Dorsolateral prefrontal cortex (tissue), 120 donors: ENCODE measurements at regions of chr5 and their contacts with region 1.

Region 1: GRCh38 chr5:36241631-36242533 is at the start of gene NADK2:
- DNase-seq: peak; percentile 89 to 96 (median 95)
- H3K4me3 ChIP-seq: peak within 1 kb of the TSS; percentile 73 to 97 (median 89)
- H3K27ac ChIP-seq: peak within 1 kb of the TSS; percentile 78 to 99 (median 97)
- H3K27me3 ChIP-seq: no peaks in the 10 kb centered on the region
- CTCF ChIP-seq: peak; percentile 37 to 90 (median 70)
- total RNA-seq, gene NADK2: 33.0 to 108 (median 60.6) TPM

Region 2: DNA sequence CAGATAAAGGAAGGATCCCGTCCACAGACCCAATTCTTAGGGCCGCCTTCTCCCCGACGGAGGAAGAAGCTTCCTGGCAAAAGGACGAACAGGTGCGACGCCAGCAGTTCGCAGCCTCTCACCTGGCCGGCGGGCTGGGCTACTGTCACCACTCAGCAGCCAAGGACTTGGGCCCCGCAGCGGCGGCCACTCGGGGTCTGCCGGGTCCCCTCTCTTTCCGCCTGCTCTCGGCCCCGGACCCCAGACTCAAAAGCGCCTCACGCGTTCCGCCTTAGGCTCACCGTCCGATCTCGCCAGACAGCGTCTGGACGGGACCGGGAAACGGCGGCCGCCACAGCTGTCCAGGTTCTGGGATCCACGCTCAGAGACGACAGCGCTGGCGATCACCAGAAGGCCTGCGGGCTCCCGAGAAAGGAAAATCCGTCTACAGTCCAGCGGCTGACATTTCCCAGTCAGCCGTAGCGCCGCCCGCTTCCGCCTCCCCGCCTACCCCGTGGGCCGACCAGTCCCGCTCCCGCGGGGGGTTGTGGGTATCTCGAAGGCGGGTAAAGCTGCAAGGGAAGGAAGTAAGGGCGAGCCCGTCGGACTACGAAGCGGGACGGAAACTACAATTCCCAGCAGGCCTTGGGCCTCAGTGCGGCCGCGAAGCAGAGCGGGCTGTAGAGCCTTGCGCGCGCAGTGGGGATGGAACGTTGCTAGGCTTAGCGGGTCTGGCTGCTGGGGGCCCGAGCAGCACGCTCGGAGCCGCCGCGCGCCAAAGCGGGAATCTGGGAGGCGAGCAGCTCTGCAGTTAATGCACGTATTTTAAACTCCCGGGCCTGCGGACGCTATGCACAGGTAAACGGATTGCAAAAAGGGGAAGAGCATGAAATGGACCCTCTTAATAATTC is 90.2 kb before region 1 on chr5 and contains the starts of genes LMBRD2 and SKP2:
- intact Hi-C with region 1: loop called (anchors 2 kb)
- DNase-seq: peak; percentile 97 to 100 (median 99)
- H3K4me3 ChIP-seq: peak within 1 kb of the TSS; percentile 69 to 100 (median 95)
- H3K27ac ChIP-seq: peak within 1 kb of the TSS in 58 of 59 donors; percentile 42 to 95 (median 83)
- H3K27me3 ChIP-seq: no peaks in the 10 kb centered on the region
- CTCF ChIP-seq: peak in 47 of 56 donors; percentile 7 to 69 (median 37)
- total RNA-seq, gene LMBRD2: 22.9 to 79.1 (median 51.0) TPM
- total RNA-seq, gene SKP2: 11.3 to 30.0 (median 19.1) TPM

Region 3: GRCh38 chr5:36162810-36163486 is 78.9 kb before region 1 on chr5:
- intact Hi-C with region 1: loop called in 1 of 2 experiments (anchors 5 kb)
- DNase-seq: peak in 2 of 10 donors; percentile 60 to 63
- H3K4me3 ChIP-seq: peak overlapping the region in 35 of 59 donors; percentile 1 to 55 (median 30)
- H3K27ac ChIP-seq: peak overlapping the region in 55 of 59 donors; percentile 6 to 90 (median 73)
- H3K27me3 ChIP-seq: no peaks in the 10 kb centered on the region
- CTCF ChIP-seq: peak in 2 of 56 donors; percentile 12 to 25

Region 4: GRCh38 chr5:36177715-36178523 is 64.0 kb before region 1 on chr5:
- intact Hi-C with region 1: loop called in 1 of 2 experiments (anchors 5 kb)
- DNase-seq: no peak
- H3K4me3 ChIP-seq: no peak overlapping the region
- H3K27ac ChIP-seq: peak overlapping the region in 55 of 59 donors; percentile 5 to 93 (median 71)
- H3K27me3 ChIP-seq: no peaks in the 10 kb centered on the region
- CTCF ChIP-seq: peak; percentile 39 to 78 (median 62)

Region 5: DNA sequence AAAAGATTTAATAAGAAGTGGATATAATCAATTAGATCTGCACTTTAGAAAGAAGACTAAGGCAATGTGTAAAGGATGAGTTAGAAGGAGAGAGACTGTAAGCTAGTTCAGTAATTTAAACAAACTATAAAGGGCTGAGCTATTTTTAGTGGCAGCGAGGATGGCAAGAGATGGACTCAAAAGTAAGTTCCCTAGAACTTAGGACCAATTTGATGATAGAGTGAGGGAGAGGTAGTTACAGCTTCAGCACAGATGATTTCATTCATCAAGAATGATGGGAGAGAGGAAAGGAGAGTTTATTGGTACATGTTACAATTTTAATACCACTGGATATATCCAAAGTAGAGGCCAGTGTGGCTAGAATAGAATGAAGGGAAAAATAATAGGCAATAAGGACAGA is 19.3 kb before region 1 on chr5:
- intact Hi-C with region 1: no loop called
- DNase-seq: no peak
- H3K4me3 ChIP-seq: no peak overlapping the region
- H3K27ac ChIP-seq: no peak overlapping the region
- H3K27me3 ChIP-seq: no peaks in the 10 kb centered on the region
- CTCF ChIP-seq: no peak

Region 6: GRCh38 chr5:36305571-36306326 is 63.9 kb after region 1 on chr5:
- intact Hi-C with region 1: loop called (anchors 5 to 10 kb)
- DNase-seq: peak; percentile 28 to 68 (median 47)
- H3K4me3 ChIP-seq: peak overlapping the region in 5 of 59 donors; percentile 3 to 19 (median 9)
- H3K27ac ChIP-seq: peak overlapping the region in 27 of 59 donors; percentile 9 to 80 (median 38)
- H3K27me3 ChIP-seq: no peaks in the 10 kb centered on the region
- CTCF ChIP-seq: peak; percentile 37 to 85 (median 70)

Region 7: DNA sequence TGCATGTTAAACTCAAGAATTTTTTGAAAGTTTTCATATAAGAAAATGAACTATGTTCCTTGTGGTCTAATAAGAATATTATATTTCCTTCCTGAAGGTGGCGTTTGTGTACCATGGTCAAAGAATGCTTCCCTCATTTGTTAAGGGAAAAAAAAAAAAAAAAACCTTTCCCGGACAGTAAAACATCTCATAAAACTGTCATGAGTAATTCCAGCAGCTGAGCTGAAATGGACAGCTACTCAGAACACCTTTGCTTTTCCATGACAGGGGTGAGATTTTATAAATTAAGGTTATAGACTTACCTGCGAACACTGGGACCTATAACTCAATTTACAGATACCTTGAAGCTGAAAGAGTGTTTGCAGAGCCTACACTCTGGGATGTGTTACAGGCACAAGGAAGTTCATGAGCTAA is 173.0 kb after region 1 on chr5:
- intact Hi-C with region 1: no loop called
- DNase-seq: no peak
- H3K4me3 ChIP-seq: no peak overlapping the region
- H3K27ac ChIP-seq: peak overlapping the region in 2 of 59 donors; percentile 8 to 38
- H3K27me3 ChIP-seq: no peaks in the 10 kb centered on the region
- CTCF ChIP-seq: peak; percentile 49 to 90 (median 72)